Activated naive CD4-positive, alpha-beta T cell treated with anti-CD3 and anti-CD28 coated beads for 36 hours (primary cell): ENCODE measurements at regions of chr6 and their contacts with region 1.

Region 1: GRCh38 chr6:166950443-166950821 is 5.9 kb downstream of the RNASET2 start:
- DNase-seq: peak; percentile 42
- H3K4me3 Mint-ChIP-seq: peak overlapping the region; percentile 62
- H3K27ac Mint-ChIP-seq: peak overlapping the region; percentile 96
- H3K4me1 Mint-ChIP-seq: peaks cover 67% of the 10 kb centered on the region
- H3K27me3 Mint-ChIP-seq: no peaks in the 10 kb centered on the region

Region 2: GRCh38 chr6:166342349-166343149 is 607.9 kb before region 1 on chr6 and contains the start of gene SFT2D1:
- CTCF ChIA-PET with region 1: no interaction called
- intact Hi-C with region 1: loop called (anchors 5 kb)
- DNase-seq: peak; percentile 74
- H3K4me3 Mint-ChIP-seq: peak within 1 kb of the TSS; percentile 83
- H3K27ac Mint-ChIP-seq: peak within 1 kb of the TSS; percentile 78
- H3K4me1 Mint-ChIP-seq: peaks cover 8% of the 10 kb centered on the region
- H3K27me3 Mint-ChIP-seq: no peaks in the 10 kb centered on the region
- total RNA-seq, gene SFT2D1: 53.1 to 53.3 TPM

Region 3: GRCh38 chr6:166488076-166488685 is 462.3 kb before region 1 on chr6:
- CTCF ChIA-PET with region 1: no interaction called
- intact Hi-C with region 1: loop called (anchors 5 kb)
- DNase-seq: peak; percentile 84
- H3K4me3 Mint-ChIP-seq: peak overlapping the region; percentile 76
- H3K27ac Mint-ChIP-seq: peak overlapping the region; percentile 97
- H3K4me1 Mint-ChIP-seq: peaks cover 20% of the 10 kb centered on the region
- H3K27me3 Mint-ChIP-seq: no peaks in the 10 kb centered on the region

Region 4: GRCh38 chr6:166834049-166834448 is 116.4 kb before region 1 on chr6:
- CTCF ChIA-PET with region 1: no interaction called
- intact Hi-C with region 1: loop called (anchors 2 kb)
- DNase-seq: no peak
- H3K4me3 Mint-ChIP-seq: no peak overlapping the region
- H3K27ac Mint-ChIP-seq: no peak overlapping the region
- H3K4me1 Mint-ChIP-seq: peaks cover 4% of the 10 kb centered on the region
- H3K27me3 Mint-ChIP-seq: no peaks in the 10 kb centered on the region

Region 5: DNA sequence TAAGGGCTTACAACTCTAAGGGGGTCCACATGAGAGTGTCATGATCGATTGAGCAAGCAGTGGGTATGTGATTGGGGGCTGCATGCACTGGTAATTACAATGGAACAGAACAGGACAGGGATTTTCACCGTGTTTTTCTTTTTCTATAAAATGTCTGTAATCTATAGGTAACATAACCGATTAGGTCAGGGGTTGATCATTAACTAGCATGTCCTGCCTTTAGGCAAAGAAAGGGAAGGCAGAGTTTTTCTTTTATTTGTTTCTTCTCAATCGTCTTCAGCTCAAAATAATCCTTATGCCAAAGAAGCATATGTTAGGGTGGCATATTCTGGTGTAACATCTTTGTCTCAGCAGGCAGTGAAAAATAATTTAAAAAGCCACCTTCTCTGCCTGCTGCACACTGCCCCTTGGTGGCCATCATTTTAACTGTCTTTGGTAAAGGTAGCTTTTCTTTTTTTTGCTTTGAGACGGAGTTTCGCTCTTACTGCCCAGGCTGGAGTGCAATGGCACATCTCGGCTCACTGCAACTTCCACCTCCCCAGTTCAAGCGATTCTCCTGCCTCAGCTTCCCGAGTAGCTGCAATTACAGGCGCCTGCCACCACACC is 39.1 kb after region 1 on chr6:
- CTCF ChIA-PET with region 1: interaction called, 22 read pairs
- intact Hi-C with region 1: loop called (anchors 1 kb)
- DNase-seq: peak; percentile 61
- H3K4me3 Mint-ChIP-seq: no peak overlapping the region
- H3K27ac Mint-ChIP-seq: no peak overlapping the region
- H3K4me1 Mint-ChIP-seq: peaks cover 19% of the 10 kb centered on the region
- H3K27me3 Mint-ChIP-seq: no peaks in the 10 kb centered on the region

Region 6: DNA sequence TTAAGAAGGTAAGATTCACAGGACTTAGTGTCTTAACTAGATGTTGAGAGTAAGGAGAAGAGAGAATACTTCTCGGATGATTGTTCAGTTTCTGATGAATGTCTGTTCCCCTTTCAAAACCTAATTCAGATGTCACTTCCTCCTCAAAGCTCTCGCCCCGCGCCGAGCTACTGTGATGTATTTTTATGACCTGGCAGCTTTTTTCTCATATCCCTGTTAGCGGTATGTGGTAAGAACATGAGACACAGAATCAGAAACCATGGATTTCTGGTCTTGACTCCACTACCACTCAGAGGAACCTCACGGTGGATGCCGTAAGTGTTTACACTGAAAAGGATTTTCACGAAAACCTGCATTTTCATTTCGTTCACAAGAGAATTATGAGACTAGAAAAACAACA is 97.1 kb after region 1 on chr6:
- CTCF ChIA-PET with region 1: no interaction called
- intact Hi-C with region 1: loop called (anchors 2 kb)
- DNase-seq: peak; percentile 84
- H3K4me3 Mint-ChIP-seq: peak overlapping the region; percentile 41
- H3K27ac Mint-ChIP-seq: peak overlapping the region; percentile 61
- H3K4me1 Mint-ChIP-seq: peaks cover 27% of the 10 kb centered on the region
- H3K27me3 Mint-ChIP-seq: no peaks in the 10 kb centered on the region

Region 7: GRCh38 chr6:167350731-167351655 is 400.6 kb after region 1 on chr6:
- CTCF ChIA-PET with region 1: no interaction called
- intact Hi-C with region 1: loop called (anchors 2 kb)
- DNase-seq: peak; percentile 95
- H3K4me3 Mint-ChIP-seq: peak overlapping the region; percentile 69
- H3K27ac Mint-ChIP-seq: peak overlapping the region; percentile 82
- H3K4me1 Mint-ChIP-seq: peaks cover 21% of the 10 kb centered on the region
- H3K27me3 Mint-ChIP-seq: peaks cover 21% of the 10 kb centered on the region